ENCODE measurements at regions of chr20 and their contacts with region 1.

Region 1: GRCh38 chr20:45934586-45935415 is at the start of gene PCIF1:
- DNase-seq: peak; percentile 93
- ATAC-seq: peak; percentile 87
- H3K4me3 ChIP-seq: peak within 1 kb of the TSS; percentile 81
- H3K27ac ChIP-seq: peak within 1 kb of the TSS; percentile 97
- H3K4me1 ChIP-seq: peaks cover 5% of the 10 kb centered on the region; the same call in 1 of the 2 replicates
- H3K27me3 ChIP-seq: no peaks in the 10 kb centered on the region
- CTCF ChIP-seq: no peak
- EP300 ChIP-seq: no peak
- POLR2A ChIP-seq: peak; percentile 98
- RAD21 ChIP-seq: no peak
- polyA plus RNA-seq, gene PCIF1: 8.4 to 10.1 TPM

Region 2: GRCh38 chr20:45798935-45799642 is 135.7 kb before region 1 on chr20:
- CTCF ChIA-PET with region 1: interaction called, 32 read pairs
- POLR2A ChIA-PET with region 1: interaction called, 3 read pairs
- RAD21 ChIA-PET with region 1: interaction called, 9 read pairs
- SMC1A ChIA-PET with region 1: interaction called, 13 read pairs
- in situ Hi-C with region 1: no loop called
- intact Hi-C with region 1: no loop called
- DNase-seq: no peak
- ATAC-seq: peak; percentile 99
- H3K4me3 ChIP-seq: no peak overlapping the region
- H3K27ac ChIP-seq: no peak overlapping the region
- H3K4me1 ChIP-seq: no peaks in the 10 kb centered on the region
- H3K27me3 ChIP-seq: no peaks in the 10 kb centered on the region
- CTCF ChIP-seq: peak; percentile 69 to 78 (median 73)
- EP300 ChIP-seq: no peak
- POLR2A ChIP-seq: no peak
- RAD21 ChIP-seq: peak; percentile 66

Region 3: GRCh38 chr20:45880988-45881788 is 53.6 kb before region 1 on chr20 and contains the start of gene ZSWIM1:
- CTCF ChIA-PET with region 1: interaction called, 4 read pairs
- POLR2A ChIA-PET with region 1: interaction called, 9 read pairs
- RAD21 ChIA-PET with region 1: interaction called, 12 read pairs
- SMC1A ChIA-PET with region 1: no interaction called
- in situ Hi-C with region 1: no loop called
- intact Hi-C with region 1: no loop called
- DNase-seq: peak; percentile 99
- ATAC-seq: peak; percentile 100
- H3K4me3 ChIP-seq: peak within 1 kb of the TSS; percentile 84
- H3K27ac ChIP-seq: peak within 1 kb of the TSS; percentile 73
- H3K4me1 ChIP-seq: peaks cover 12% of the 10 kb centered on the region
- H3K27me3 ChIP-seq: no peaks in the 10 kb centered on the region
- CTCF ChIP-seq: no peak
- EP300 ChIP-seq: no peak
- POLR2A ChIP-seq: peak; percentile 98
- RAD21 ChIP-seq: no peak
- polyA plus RNA-seq, gene ZSWIM1: 2.4 to 2.5 TPM

Region 4: GRCh38 chr20:45910670-45911485 is 23.9 kb before region 1 on chr20:
- CTCF ChIA-PET with region 1: interaction called, 5 read pairs
- POLR2A ChIA-PET with region 1: interaction called, 32 read pairs
- RAD21 ChIA-PET with region 1: interaction called, 4 read pairs
- SMC1A ChIA-PET with region 1: interaction called, 5 read pairs
- in situ Hi-C with region 1: no loop called
- intact Hi-C with region 1: no loop called
- DNase-seq: peak; percentile 99
- ATAC-seq: peak; percentile 96
- H3K4me3 ChIP-seq: peak overlapping the region; percentile 77
- H3K27ac ChIP-seq: peak overlapping the region; percentile 61; the same call in 1 of the 2 replicates
- H3K4me1 ChIP-seq: peaks cover 15% of the 10 kb centered on the region
- H3K27me3 ChIP-seq: no peaks in the 10 kb centered on the region
- CTCF ChIP-seq: no peak
- EP300 ChIP-seq: no peak
- POLR2A ChIP-seq: peak; percentile 77
- RAD21 ChIP-seq: no peak

Region 5: DNA sequence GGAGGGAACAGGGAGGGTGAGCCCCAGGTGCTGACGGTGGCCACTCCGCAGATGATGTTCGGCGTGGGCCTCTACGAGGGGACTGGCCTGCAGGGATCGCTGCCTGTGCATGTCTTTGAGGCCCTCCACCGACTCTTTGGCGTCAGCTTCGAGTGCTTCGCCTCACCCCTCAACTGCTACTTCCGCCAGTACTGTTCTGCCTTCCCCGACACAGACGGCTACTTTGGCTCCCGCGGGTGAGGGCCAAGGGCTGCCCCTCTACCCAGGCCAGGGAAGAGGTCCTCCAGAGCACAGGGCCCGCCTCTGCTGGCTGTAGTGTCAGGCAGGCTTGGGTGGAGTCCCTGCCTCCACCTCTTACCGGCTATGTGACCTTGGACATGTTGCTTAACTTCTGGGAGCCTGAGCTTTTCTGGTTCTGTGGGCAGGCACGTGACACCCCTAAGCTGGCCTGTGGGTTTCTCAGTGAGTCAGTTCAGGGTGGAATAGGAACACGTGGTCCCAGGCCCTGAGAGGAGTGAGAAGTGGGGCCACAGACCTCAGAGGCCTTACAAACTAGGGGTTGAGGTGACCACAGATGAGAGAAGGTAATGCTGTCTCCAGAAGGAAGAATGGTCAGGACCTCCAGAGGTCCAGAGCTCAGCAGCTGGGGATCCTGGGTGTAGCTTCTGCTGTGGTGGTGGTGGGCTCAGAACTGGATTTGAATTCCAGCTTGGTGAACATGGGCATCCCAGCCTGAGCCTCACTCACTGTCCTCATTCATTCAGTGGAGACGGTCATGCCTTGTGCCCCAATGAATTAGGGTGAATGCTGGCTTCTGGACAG is 11.6 kb after region 1 on chr20:
- CTCF ChIA-PET with region 1: no interaction called
- POLR2A ChIA-PET with region 1: interaction called, 11 read pairs
- RAD21 ChIA-PET with region 1: interaction called, 3 read pairs
- SMC1A ChIA-PET with region 1: interaction called, 4 read pairs
- in situ Hi-C with region 1: no loop called
- intact Hi-C with region 1: no loop called
- DNase-seq: no peak
- ATAC-seq: peak; percentile 7; the same call in 2 of the 3 replicates
- H3K4me3 ChIP-seq: no peak overlapping the region
- H3K27ac ChIP-seq: no peak overlapping the region
- H3K4me1 ChIP-seq: peaks cover 3% of the 10 kb centered on the region; the same call in 1 of the 2 replicates
- H3K27me3 ChIP-seq: no peaks in the 10 kb centered on the region
- CTCF ChIP-seq: no peak
- EP300 ChIP-seq: no peak
- POLR2A ChIP-seq: peak; percentile 39
- RAD21 ChIP-seq: no peak

Region 6: DNA sequence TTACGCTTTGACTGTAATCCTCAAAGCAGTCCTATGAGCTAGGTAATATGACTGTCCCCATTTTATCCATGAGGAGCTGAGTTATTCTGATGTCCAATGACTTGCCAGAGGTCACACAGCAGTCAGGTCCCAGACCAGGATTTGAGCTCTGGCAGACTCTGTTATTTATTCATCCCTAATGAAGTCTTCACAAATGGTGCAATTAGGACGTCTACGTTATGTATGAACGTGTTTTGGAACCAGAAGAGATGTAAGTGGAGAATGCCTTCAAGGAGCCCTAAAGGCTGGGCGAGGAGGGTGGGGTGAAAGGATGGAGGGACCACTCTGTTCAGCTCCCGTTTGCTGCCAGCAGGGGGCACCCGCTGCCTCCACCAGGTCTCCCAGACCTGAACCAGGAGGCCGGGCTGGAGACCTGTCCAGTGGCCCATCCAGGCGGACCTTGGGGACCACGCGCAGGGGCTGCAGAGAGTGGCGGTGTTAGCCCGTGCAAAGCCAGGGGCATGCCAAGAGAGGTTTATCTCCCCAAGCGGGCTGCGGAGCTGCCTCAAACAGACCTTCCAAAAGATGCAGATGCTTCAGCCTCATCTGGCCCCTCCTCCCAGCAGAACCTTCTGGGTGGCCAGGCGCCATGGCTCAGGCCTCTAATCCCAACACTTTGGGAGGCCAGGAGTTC is 52.4 kb after region 1 on chr20:
- CTCF ChIA-PET with region 1: interaction called, 11 read pairs
- POLR2A ChIA-PET with region 1: no interaction called
- RAD21 ChIA-PET with region 1: interaction called, 8 read pairs
- SMC1A ChIA-PET with region 1: no interaction called
- in situ Hi-C with region 1: no loop called
- intact Hi-C with region 1: no loop called
- DNase-seq: no peak
- ATAC-seq: peak; percentile 100
- H3K4me3 ChIP-seq: no peak overlapping the region
- H3K27ac ChIP-seq: no peak overlapping the region
- H3K4me1 ChIP-seq: peaks cover 6% of the 10 kb centered on the region
- H3K27me3 ChIP-seq: no peaks in the 10 kb centered on the region; a peak in 1 of 4 replicates
- CTCF ChIP-seq: peak; percentile 92 to 96 (median 93)
- EP300 ChIP-seq: no peak
- POLR2A ChIP-seq: no peak
- RAD21 ChIP-seq: peak; percentile 83

Region 7: GRCh38 chr20:46040902-46041535 is 106.2 kb after region 1 on chr20:
- CTCF ChIA-PET with region 1: no interaction called
- POLR2A ChIA-PET with region 1: no interaction called
- RAD21 ChIA-PET with region 1: no interaction called
- SMC1A ChIA-PET with region 1: no interaction called
- in situ Hi-C with region 1: no loop called
- intact Hi-C with region 1: no loop called
- DNase-seq: no peak
- ATAC-seq: peak; percentile 81
- H3K4me3 ChIP-seq: no peak overlapping the region
- H3K27ac ChIP-seq: no peak overlapping the region
- H3K4me1 ChIP-seq: no peaks in the 10 kb centered on the region
- H3K27me3 ChIP-seq: no peaks in the 10 kb centered on the region; a peak in 2 of 4 replicates
- CTCF ChIP-seq: no peak
- EP300 ChIP-seq: no peak
- POLR2A ChIP-seq: no peak
- RAD21 ChIP-seq: no peak